ENCODE measurements at regions of chr7 and their contacts with region 1.

Region 1: DNA sequence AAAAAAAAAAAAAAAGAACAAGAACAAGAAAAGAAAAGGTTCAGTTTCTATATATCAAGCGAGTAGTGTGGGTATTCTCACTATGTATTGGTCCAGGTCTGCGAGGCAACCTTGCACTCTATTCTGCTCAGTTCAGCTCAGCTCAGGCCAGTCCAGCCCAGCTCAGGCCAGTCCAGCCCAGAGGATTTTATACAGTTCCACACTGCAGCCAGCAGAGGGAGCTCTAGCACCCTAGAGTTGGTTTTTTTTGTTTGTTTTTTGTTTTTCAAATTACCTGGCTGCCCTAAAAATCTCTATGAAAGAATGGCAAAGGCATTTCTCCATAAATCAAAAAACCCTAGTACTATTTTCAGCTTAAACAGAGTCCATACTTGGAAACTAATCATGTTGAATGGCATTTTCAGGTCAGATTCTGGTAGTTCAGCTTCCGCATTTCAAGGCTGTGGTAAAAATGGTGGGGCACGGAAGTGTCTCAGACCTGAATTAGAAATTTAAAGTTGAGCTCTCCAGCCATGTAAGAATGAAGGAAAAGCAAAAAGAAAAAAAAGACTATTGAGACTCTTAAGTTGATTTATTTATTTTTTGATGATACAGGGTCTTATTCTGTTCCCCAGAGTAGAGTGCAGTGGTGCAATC is 55.2 kb upstream of the GSDME start:
- DNase-seq: peak in 7 of 10 donors; percentile 27 to 88 (median 56)

Region 2: DNA sequence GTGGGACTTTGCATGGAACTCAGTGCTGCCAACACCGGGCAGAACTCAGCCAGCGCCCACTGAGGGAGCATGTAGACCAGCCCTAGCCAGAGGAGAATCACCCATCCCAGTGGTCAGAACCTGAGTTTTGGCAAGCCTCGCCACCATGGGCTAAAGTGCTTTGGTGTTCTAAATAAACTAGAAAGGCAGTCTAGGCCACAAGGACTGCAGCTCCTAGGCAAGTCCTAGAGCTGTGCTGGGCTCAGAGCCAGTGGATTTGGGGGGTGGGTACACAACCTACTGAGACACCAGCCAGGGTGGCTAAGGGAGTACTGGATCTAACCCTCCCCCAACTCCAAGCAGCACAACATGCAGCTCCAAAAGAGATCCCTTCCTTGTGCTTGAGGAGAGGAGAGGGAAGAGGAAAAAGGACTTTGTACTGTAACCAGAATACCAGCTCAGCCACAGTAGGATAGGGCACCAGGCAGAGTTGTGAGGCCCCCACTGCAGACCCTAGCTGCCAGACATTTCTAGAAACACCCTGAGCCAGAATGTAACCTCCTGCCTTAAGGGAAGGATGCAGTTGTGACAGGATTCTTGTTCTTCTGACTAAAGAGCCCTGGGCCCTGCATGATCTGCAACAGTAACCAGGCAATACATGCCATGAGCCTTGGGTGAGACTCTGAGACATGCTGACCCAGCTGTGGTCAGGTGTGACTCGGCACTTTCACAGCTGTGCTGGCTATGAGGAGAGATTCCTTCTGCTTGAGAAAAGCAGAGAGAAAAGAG is 79.6 kb before region 1 on chr7:
- intact Hi-C with region 1: no loop called
- DNase-seq: peak in 1 of 10 donors; percentile 66

Region 3: DNA sequence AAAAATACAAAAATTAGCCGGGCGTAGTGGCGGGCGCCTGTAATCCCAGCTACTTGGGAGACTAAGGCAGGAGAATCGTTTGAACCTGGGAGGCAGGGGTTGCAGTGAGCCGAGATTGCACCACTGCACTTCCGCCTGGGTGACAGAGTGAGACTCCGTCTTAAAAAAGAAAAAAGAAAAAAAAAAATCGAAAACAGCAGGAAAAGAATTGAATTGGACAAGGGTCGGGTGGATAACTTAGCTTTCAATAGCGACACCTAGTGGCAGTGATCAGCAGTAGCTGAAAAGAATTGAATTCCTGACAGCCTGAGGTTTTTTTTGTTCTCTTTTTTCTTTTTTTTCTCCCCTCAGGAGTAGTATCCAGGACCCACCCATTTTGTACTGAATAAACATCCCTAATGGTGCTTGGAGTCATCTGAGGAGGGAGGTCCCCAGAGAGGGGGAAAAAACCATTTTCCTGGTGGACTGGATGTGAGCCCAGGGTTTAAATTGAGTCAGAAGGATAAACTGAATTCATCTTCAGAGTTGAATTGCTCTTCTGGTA is 257.5 kb after region 1 on chr7:
- intact Hi-C with region 1: loop called (anchors 2 kb)
- DNase-seq: peak in 6 of 10 donors; percentile 8 to 80 (median 28)